ENCODE measurements at regions of chr11 and their contacts with region 1.

Region 1: DNA sequence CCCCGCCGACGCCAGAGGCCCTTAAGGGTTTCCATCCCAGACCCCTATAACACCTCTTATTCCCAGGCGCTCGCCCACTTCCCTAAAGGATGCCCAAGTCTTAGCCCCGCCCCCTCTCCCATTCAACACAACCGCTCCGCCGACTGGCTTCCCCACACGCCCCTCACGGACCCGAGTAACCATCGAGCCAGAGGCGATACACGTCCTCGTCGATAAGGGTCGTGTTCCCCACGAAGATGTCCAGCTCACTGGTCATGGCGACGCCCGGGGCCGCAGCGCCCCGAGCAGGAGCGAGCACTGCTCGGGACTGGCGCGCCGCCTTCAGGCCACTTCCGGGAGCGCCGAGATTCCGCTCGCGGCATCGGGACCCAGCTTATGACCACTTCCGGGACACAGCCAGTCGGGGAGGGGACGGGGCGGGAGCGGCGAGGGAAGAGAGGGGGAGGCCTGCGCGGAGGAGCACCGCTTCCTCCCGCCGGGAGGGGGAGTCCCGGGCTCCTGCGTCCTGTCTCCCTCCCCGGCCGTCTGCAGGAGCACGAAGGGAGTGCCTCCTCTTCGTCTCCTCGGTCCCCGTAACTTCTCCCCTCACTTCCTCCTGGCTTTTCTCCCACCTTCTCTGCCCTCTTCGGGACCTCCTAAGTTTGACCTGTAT is at the start of gene FIBP:
- DNase-seq: peak; percentile 97
- H3K4me3 ChIP-seq: peak within 1 kb of the TSS; percentile 56 to 82
- H3K27ac ChIP-seq: peak within 1 kb of the TSS; percentile 94 to 99
- H3K4me1 ChIP-seq: peaks cover 41 to 52% of the 10 kb centered on the region in 2 experiments
- H3K27me3 ChIP-seq: no peaks in the 10 kb centered on the region
- CTCF ChIP-seq: peak; percentile 68
- EP300 ChIP-seq: no peak
- RAD21 ChIP-seq: peak; percentile 24
- polyA plus RNA-seq, gene FIBP: 159 and 190 TPM in 2 replicates

Region 2: DNA sequence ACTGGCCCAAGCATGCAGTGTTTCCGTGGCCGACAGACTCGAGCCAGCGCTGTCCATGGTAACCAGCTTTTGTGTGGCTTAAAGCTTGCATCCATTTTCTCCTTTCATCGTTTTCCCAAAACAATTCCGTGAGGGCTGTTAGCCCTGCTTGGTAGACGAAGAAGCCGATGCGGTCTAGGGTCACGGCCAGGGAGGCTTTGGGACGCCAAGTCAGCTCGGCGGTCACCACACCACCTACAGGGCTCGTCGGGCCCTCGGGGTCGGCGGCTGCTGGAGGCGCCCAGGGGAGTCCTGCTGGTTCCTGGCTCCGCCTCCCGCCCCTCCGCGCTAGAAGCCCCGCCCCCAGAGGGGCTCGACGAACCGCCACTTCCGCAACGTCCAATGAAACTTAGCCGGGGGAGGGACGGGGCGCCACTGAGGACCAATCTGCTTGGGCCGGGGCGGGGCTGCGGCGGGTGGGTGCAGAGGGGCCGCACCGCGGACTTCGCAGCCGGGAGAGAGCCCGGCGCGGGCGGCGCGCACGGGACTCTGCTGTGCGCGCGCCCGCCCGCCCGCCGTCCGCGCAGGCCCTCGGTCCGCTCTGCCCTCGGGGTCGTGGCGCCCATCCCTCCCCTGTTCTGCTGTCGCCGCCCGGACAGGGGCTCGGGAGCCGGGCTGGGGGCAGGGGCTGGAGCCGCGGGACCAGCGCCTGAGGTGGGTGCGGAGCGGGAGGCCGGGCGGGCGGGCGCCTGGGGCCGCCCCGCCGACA is 533.9 kb before region 1 on chr11 and contains the start of gene TIGD3:
- CTCF ChIA-PET with region 1: no interaction called
- POLR2A ChIA-PET with region 1: no interaction called
- DNase-seq: peak; percentile 99
- H3K4me3 ChIP-seq: peak within 1 kb of the TSS; percentile 71 to 74
- H3K27ac ChIP-seq: peak within 1 kb of the TSS; percentile 34 to 83
- H3K4me1 ChIP-seq: peaks cover 0 to 20% of the 10 kb centered on the region in 2 experiments; a peak in 1 of 4 replicates
- H3K27me3 ChIP-seq: no peaks in the 10 kb centered on the region
- CTCF ChIP-seq: 0 out of 2 replicates have a peak, but pooled peaks have one; percentile 13
- EP300 ChIP-seq: no peak
- RAD21 ChIP-seq: no peak
- polyA plus RNA-seq, gene TIGD3: 0.34 and 0.41 TPM in 2 replicates

Region 3: DNA sequence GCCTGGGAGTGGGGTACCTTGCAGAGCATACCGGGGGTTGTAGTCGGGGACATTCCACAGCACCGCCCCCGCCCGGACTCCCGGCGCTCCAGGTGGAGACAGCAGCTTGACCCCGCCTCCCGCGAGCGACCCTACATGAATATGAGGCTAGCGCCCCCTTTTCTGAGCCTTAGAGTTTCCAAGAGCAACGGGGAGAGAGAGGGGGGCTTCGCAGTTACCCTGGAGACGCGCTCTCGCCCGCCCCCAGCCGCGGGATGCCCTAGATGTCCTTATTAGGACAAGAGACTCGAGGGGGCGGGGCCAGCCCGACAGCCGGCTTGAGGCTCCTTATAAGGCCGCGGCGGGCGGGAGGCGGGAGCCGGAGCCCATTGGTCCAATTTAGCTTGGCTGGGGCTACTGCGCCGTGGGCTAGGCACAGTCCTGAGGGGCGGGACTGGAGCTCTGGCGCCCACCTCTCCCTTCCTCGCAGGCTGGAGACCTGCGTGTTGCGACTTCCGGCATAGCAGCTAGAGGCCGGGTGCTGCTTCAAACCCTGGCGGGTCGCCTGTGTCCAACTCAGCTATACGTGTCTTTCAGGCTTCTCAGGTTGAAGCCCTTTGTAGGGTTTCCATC is 29.0 kb before region 1 on chr11:
- CTCF ChIA-PET with region 1: interaction called, 374 read pairs
- POLR2A ChIA-PET with region 1: interaction called, 46 read pairs
- DNase-seq: peak; percentile 90
- H3K4me3 ChIP-seq: peak overlapping the region; percentile 97 to 99
- H3K27ac ChIP-seq: peak overlapping the region; percentile 93
- H3K4me1 ChIP-seq: peaks cover 10 to 29% of the 10 kb centered on the region in 2 experiments
- H3K27me3 ChIP-seq: no peaks in the 10 kb centered on the region
- CTCF ChIP-seq: peak; percentile 25; the same call in 1 of the 2 replicates
- EP300 ChIP-seq: peak in 1 of 2 experiments; percentile 20; a peak in 1 of 4 replicates
- RAD21 ChIP-seq: no peak

Region 4: DNA sequence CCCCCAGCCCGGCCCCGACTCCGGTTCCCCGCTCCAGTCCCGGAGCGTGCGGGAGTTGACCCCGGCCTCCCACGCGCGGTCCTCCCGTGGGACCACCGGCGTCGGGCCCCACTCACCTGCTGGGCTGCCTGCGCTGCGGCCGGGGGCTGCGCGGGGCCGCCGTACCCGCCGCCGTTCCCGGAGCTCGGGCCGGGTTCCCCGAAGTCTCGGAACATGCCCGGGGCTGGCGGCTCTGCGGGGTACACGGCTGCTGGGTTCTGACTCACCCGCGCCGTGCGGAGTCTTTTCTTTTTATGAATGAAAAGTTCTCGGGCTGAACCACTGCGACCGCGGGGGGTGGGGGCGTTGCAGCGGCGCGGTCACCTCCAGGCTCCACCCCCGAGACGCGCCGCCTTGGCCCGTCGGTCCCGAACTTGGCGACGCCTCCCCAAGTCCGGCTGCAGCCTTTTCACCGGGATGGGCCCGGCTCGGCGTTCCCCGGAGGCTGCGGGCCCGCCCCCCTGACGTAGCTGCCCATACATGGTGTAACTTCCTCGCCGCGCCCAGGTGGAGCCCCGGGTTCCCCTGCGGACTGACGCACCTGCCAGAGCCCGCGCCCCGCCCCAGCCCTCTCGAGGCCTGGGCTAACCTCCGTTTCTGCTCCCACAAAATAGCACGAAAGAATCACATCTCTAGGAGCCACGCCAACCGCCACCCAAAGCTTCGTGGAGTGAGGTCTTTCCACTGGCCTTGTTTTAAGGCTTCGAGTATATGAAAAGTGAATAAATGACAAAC is 12.0 kb after region 1 on chr11 and contains the start of gene FOSL1:
- CTCF ChIA-PET with region 1: interaction called, 35 read pairs
- POLR2A ChIA-PET with region 1: interaction called, 4 read pairs
- DNase-seq: peak; percentile 81
- H3K4me3 ChIP-seq: peak within 1 kb of the TSS; percentile 59 to 82
- H3K27ac ChIP-seq: peak within 1 kb of the TSS in 1 of 2 experiments; percentile 95; a peak in 3 of 4 replicates
- H3K4me1 ChIP-seq: peaks cover 0 to 44% of the 10 kb centered on the region in 2 experiments; a peak in 3 of 4 replicates
- H3K27me3 ChIP-seq: no peaks in the 10 kb centered on the region
- CTCF ChIP-seq: no peak
- EP300 ChIP-seq: peak in 1 of 2 experiments; percentile 52; a peak in 1 of 4 replicates
- RAD21 ChIP-seq: no peak
- polyA plus RNA-seq, gene FOSL1: 17.9 and 30.1 TPM in 2 replicates

Region 5: GRCh38 chr11:65911682-65912568 is 23.6 kb after region 1 on chr11:
- CTCF ChIA-PET with region 1: interaction called, 71 read pairs
- POLR2A ChIA-PET with region 1: interaction called, 4 read pairs
- DNase-seq: peak; percentile 84
- H3K4me3 ChIP-seq: no peak overlapping the region
- H3K27ac ChIP-seq: peak overlapping the region in 1 of 2 experiments; percentile 97; a peak in 2 of 4 replicates
- H3K4me1 ChIP-seq: peaks cover 12 to 47% of the 10 kb centered on the region in 2 experiments; a peak in 3 of 4 replicates
- H3K27me3 ChIP-seq: no peaks in the 10 kb centered on the region
- CTCF ChIP-seq: peak; percentile 51
- EP300 ChIP-seq: peak in 1 of 2 experiments; percentile 43; a peak in 1 of 4 replicates
- RAD21 ChIP-seq: peak; percentile 69

Region 6: DNA sequence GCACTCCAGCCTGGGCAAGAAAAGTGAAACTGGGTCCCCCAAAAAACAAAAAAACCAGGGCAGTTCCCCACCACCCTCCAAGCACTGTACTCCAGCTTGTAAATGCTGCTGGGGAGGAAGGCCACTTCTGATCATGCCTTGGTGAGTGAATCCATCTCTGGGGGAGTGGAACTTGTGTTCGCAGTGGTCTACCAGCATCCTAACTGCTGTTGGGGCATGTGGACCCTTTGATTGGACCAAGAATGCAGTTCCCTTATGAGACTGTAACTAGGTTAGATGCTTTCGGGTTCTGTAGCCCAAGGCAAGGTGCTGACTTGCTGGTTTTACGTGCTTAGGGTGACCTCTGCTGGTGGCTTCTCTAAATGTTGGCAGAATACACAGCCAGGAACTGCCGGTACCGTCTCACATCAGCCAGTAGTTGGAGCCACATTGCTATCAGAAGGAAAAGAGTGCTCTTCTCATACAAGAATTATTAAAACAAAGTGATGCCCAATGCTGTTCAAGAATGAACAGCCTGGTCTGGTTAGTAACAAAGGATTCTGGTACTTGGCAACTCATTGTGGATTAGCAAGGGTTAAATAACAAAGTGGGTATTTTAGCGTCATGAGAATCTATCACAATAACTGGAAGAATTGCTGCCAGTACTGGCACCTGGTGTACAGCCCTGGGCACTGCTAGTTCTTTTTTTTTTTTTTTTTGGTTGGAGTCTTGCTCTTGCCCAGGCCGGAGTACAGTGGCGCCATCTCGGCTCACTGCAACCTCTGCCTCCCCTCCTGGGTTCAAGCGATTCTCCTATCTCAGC is 100.7 kb after region 1 on chr11:
- CTCF ChIA-PET with region 1: interaction called, 261 read pairs
- POLR2A ChIA-PET with region 1: interaction called, 4 read pairs
- DNase-seq: peak; percentile 85
- H3K4me3 ChIP-seq: peak overlapping the region in 1 of 2 experiments; percentile 4; a peak in 1 of 4 replicates
- H3K27ac ChIP-seq: peak overlapping the region; percentile 17 to 18; a peak in 2 of 4 replicates
- H3K4me1 ChIP-seq: peaks cover 0 to 2% of the 10 kb centered on the region in 2 experiments; a peak in 1 of 4 replicates
- H3K27me3 ChIP-seq: no peaks in the 10 kb centered on the region
- CTCF ChIP-seq: peak; percentile 100
- EP300 ChIP-seq: no peak
- RAD21 ChIP-seq: peak; percentile 97

Measured in SK-N-SH (cell line).